A549 (cell line): ENCODE measurements at regions of chr5 and their contacts with region 1.

Region 1: GRCh38 chr5:174327317-174328236 is 282.1 kb downstream of the NSG2 start:
- DNase-seq: peak; percentile 78 to 83
- ATAC-seq: peak; percentile 75 to 94
- H3K4me3 ChIP-seq: no peak overlapping the region
- H3K27ac ChIP-seq: peak overlapping the region; percentile 17 to 73; a peak in 3 of 6 replicates
- H3K4me1 ChIP-seq: peaks cover 9% of the 10 kb centered on the region; the same call in 1 of the 3 replicates
- CTCF ChIP-seq: peak; percentile 85
- EP300 ChIP-seq: no peak
- POLR2A ChIP-seq: no peak
- RAD21 ChIP-seq: peak; percentile 74 to 76

Region 2: DNA sequence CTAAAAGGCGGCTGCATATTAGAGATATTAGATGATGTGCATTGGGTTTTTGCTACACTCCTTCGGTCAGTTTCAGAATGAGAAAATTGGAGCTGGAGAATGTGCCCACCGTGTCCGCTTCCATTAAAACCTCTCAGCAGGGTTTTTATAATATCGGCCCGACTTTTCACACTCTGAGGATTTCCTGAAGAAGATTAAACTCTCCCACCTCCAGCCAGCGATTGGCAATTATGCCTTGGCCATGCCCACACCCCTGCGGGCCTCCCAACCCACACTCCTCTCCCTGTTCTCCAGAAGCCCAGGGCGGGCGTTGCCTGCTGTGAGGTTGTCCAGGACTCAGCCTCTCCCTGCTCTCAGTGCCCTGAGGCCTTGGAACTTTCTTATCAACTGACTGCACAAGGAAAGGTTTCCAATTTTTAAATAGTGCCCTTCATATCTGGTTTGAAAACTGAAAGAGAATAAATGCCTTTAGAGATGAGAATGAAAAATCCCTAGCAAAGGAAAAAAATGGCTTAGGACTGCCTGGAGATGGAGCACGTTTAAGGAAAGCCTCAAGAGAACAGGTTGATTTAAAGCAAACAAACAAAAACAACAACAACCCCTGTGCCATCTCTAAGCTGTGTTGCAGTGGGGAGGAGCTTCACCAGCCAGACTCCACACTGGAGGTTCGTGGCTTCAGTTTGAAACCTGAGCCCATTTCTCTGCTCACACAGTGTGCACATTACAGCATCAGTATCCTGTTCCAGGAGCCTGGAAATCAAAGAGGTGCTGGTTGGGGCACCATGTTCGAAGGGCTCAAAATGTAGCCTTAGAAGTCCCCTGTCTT is 10.8 kb after region 1 on chr5:
- CTCF ChIA-PET with region 1: interaction called, 52 read pairs
- POLR2A ChIA-PET with region 1: no interaction called
- DNase-seq: no peak
- ATAC-seq: peak in 1 of 2 experiments; percentile 34; a peak in 1 of 6 replicates
- H3K4me3 ChIP-seq: no peak overlapping the region
- H3K27ac ChIP-seq: no peak overlapping the region
- H3K4me1 ChIP-seq: no peaks in the 10 kb centered on the region
- CTCF ChIP-seq: no peak
- EP300 ChIP-seq: no peak
- POLR2A ChIP-seq: no peak
- RAD21 ChIP-seq: no peak

Region 3: DNA sequence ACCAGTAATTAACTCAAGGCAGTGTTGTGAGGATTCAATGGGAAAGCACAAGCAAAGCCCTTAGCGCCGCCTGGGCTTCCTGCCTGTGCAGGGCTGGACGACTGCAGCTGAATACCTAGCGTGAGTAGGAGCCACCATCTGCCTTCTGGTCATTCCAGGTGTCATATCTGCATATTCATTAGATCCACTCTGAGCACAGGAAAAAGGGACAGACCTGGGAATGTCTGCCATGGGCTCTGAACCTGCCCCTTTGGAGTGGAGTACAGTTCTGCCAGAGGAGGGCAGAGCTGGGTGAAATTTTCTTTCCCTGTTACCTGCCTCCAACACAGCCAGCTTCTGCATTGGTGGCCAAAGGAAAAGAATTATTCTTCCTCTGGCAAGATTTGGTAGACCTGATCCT is 16.8 kb after region 1 on chr5:
- CTCF ChIA-PET with region 1: interaction called, 52 read pairs
- POLR2A ChIA-PET with region 1: no interaction called
- DNase-seq: no peak
- ATAC-seq: no peak; a peak in 1 of 6 replicates
- H3K4me3 ChIP-seq: no peak overlapping the region
- H3K27ac ChIP-seq: no peak overlapping the region
- H3K4me1 ChIP-seq: no peaks in the 10 kb centered on the region
- CTCF ChIP-seq: no peak
- EP300 ChIP-seq: no peak
- POLR2A ChIP-seq: no peak
- RAD21 ChIP-seq: no peak

Region 4: DNA sequence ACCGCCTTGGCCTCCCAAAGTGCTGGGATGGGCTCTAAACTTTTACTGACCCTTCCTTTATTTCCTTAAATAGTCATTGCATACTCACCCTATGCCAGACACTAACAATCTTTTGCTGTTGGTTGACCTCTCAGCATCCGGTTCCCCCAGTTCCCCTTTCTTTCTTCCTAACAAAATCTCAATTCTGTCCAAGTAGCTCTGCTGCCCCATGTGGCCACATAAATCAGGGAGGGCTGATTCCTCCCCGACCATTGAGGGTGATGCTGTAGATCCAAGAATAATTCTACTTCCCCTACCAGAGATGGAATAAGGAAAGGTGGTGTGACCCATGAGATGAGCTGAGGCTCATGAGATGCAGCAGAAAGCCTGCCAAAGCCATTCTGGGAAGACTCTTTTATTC is 81.5 kb after region 1 on chr5:
- CTCF ChIA-PET with region 1: interaction called, 11 read pairs
- POLR2A ChIA-PET with region 1: no interaction called
- DNase-seq: no peak
- ATAC-seq: peak in 1 of 2 experiments; percentile 40; a peak in 2 of 6 replicates
- H3K4me3 ChIP-seq: no peak overlapping the region
- H3K27ac ChIP-seq: no peak overlapping the region
- H3K4me1 ChIP-seq: peaks cover 36% of the 10 kb centered on the region; the same call in 2 of the 3 replicates
- CTCF ChIP-seq: peak; percentile 5; the same call in 1 of the 3 replicates
- EP300 ChIP-seq: no peak
- POLR2A ChIP-seq: no peak
- RAD21 ChIP-seq: no peak